ENCODE measurements at regions of chr10 and their contacts with region 1.

Region 1: DNA sequence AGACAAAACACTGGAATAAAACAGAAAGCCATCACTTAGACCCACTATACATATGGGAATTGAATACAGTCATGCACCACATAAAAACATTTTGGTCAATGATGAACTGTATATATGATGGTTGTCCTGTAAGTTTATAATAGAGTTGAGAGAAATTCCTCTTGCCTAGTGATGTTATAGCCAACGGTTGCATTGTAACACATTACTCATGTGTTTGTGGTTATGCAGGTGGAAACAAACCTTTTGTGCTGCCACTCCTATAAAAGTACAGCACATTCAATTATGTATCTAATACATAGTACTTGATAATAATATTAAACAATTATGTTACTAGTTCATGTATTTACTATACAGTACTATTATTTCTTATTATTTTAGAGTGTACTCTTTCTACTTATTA is 381.2 kb upstream of the MBL2 start:
- DNase-seq: no peak
- H3K4me3 ChIP-seq: no peak overlapping the region
- H3K27ac ChIP-seq: no peak overlapping the region
- H3K4me1 ChIP-seq: no peaks in the 10 kb centered on the region
- CTCF ChIP-seq: no peak

Region 2: DNA sequence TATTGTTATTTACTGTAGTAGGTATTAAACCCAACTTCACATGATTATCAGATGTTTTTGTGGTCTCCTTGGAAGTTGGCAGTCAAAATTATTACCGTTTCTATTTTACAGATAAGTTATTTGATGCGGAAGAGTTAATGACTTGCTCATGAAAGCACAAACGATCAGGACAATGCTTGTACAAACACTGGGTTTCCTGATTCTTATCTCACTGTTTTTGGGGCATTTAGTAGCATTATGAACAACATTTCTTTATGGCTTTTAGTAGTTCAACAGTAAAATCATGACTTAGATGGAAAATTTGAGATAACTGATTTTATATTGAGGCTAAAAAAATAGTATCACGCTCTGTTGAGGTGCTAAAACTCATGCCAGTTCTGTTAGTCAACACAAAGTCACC is 19.8 kb before region 1 on chr10:
- CTCF ChIA-PET with region 1: no interaction called
- POLR2A ChIA-PET with region 1: interaction called, 12 read pairs
- intact Hi-C with region 1: no loop called
- DNase-seq: no peak
- H3K4me3 ChIP-seq: no peak overlapping the region
- H3K27ac ChIP-seq: no peak overlapping the region
- H3K4me1 ChIP-seq: no peaks in the 10 kb centered on the region
- CTCF ChIP-seq: no peak

Measured in OCI-LY7 (cell line).